Esophagus muscularis mucosa (tissue), 4 donors: ENCODE measurements at regions of chr12 and their contacts with region 1.

Region 1: GRCh38 chr12:112219195-112219594 is 93.8 kb downstream of the TRAFD1 start:
- DNase-seq: no peak
- H3K4me3 ChIP-seq: no peak overlapping the region
- H3K27ac ChIP-seq: no peak overlapping the region
- H3K4me1 ChIP-seq: no peaks in the 10 kb centered on the region
- H3K27me3 ChIP-seq: no peaks in the 10 kb centered on the region
- CTCF ChIP-seq: no peak
- EP300 ChIP-seq: no peak
- POLR2A ChIP-seq: no peak

Region 2: DNA sequence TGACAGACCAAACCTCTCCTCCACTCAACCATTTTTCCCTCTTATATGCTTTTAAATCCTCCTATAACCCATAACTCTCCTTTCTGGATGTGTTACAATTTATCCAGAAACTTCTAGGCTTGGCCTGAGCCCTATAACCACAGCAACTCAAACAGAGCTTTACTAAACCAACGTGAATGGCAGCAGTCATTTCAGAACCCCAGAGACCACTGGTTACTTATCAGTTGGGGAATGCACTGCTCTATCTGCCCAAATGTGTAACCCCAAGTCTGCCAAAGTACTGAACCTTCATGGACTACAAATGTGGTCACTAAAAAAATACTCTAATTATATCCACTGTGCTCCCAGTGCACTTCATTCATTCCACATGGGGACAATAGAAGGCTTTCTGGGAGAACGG is 152.6 kb before region 1 on chr12:
- intact Hi-C with region 1: loop called (anchors 10 kb)
- DNase-seq: no peak
- H3K4me3 ChIP-seq: no peak overlapping the region
- H3K27ac ChIP-seq: no peak overlapping the region
- H3K4me1 ChIP-seq: no peaks in the 10 kb centered on the region
- H3K27me3 ChIP-seq: no peaks in the 10 kb centered on the region
- CTCF ChIP-seq: no peak
- EP300 ChIP-seq: no peak
- POLR2A ChIP-seq: no peak